Mammary epithelial cell (primary cell): ENCODE measurements at regions of chr4 and their contacts with region 1.

Region 1: GRCh38 chr4:101347557-101348366 is 436 bp upstream of the PPP3CA start:
- DNase-seq: peak; percentile 96
- H3K4me3 ChIP-seq: peak overlapping the region; percentile 77 to 97 (median 96)
- H3K27ac ChIP-seq: peak overlapping the region; percentile 96
- H3K4me1 ChIP-seq: peaks cover 31% of the 10 kb centered on the region
- H3K27me3 ChIP-seq: no peaks in the 10 kb centered on the region
- CTCF ChIP-seq: peak in 1 of 2 donors; percentile 14

Region 2: DNA sequence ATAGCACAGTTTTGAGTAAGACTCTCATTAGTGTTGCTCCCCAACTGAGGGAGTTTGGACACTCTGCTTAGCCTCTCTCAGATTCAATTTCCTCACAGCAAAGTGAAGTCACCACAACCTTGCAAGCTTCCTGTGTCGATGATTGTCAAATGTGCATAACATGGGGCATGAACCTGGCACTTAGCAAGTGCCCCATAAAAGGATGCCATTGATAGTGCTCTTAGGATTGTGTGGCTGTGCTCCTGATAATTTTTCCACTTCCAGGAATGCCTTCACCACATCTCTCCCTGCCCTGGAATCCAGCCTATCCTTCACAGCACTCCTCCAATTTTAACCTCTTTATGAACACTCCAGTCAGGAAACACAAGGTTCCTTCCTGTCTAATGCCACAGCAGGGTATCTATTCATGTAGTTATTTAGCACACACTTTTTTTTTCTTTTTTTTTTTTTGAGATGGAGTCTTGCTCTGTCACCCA is 309.8 kb before region 1 on chr4:
- CTCF ChIA-PET with region 1: no interaction called
- dilution Hi-C with region 1: no loop called
- in situ Hi-C with region 1: no loop called
- intact Hi-C with region 1: loop called (anchors 5 kb)
- DNase-seq: no peak
- H3K4me3 ChIP-seq: no peak overlapping the region
- H3K27ac ChIP-seq: no peak overlapping the region
- H3K4me1 ChIP-seq: peaks cover 15% of the 10 kb centered on the region
- H3K27me3 ChIP-seq: no peaks in the 10 kb centered on the region
- CTCF ChIP-seq: no peak

Region 3: GRCh38 chr4:101187841-101188240 is 159.9 kb before region 1 on chr4:
- CTCF ChIA-PET with region 1: no interaction called
- dilution Hi-C with region 1: no loop called
- in situ Hi-C with region 1: no loop called
- intact Hi-C with region 1: loop called (anchors 1 kb)
- DNase-seq: no peak
- H3K4me3 ChIP-seq: no peak overlapping the region
- H3K27ac ChIP-seq: no peak overlapping the region
- H3K4me1 ChIP-seq: peaks cover 18% of the 10 kb centered on the region
- H3K27me3 ChIP-seq: no peaks in the 10 kb centered on the region
- CTCF ChIP-seq: peak; percentile 29 to 52

Region 4: GRCh38 chr4:101367201-101367600 is 19.4 kb after region 1 on chr4:
- CTCF ChIA-PET with region 1: no interaction called
- dilution Hi-C with region 1: no loop called
- in situ Hi-C with region 1: no loop called
- intact Hi-C with region 1: loop called (anchors 1 kb)
- DNase-seq: peak; percentile 79
- H3K4me3 ChIP-seq: no peak overlapping the region
- H3K27ac ChIP-seq: peak overlapping the region; percentile 86
- H3K4me1 ChIP-seq: peaks cover 20% of the 10 kb centered on the region
- H3K27me3 ChIP-seq: no peaks in the 10 kb centered on the region
- CTCF ChIP-seq: no peak

Region 5: DNA sequence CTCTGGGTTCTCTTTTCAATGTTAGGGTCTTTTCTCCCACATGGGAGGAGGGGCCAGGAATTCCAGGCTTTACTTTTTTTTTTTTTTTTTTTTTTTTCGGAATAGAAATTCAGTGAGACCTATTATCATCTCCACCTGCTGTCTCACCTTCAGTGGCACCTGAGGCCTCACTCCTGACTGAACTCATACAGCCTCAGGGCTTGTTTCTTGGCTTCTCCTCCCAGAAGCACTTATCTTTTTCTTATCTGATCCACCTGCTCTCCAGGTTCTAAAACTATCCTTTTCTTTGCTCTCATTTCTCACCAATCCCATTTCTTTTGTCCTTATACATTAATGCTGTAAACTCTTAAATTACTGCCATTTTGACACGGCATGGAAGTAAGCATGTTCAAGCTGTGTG is 116.8 kb after region 1 on chr4:
- CTCF ChIA-PET with region 1: no interaction called
- dilution Hi-C with region 1: no loop called
- in situ Hi-C with region 1: no loop called
- intact Hi-C with region 1: loop called (anchors 5 kb)
- DNase-seq: no peak
- H3K4me3 ChIP-seq: no peak overlapping the region
- H3K27ac ChIP-seq: no peak overlapping the region
- H3K4me1 ChIP-seq: no peaks in the 10 kb centered on the region
- H3K27me3 ChIP-seq: no peaks in the 10 kb centered on the region
- CTCF ChIP-seq: no peak

Region 6: GRCh38 chr4:101599620-101600019 is 251.9 kb after region 1 on chr4:
- CTCF ChIA-PET with region 1: no interaction called
- dilution Hi-C with region 1: no loop called
- in situ Hi-C with region 1: no loop called
- intact Hi-C with region 1: loop called (anchors 1 kb)
- DNase-seq: peak; percentile 84
- H3K4me3 ChIP-seq: no peak overlapping the region
- H3K27ac ChIP-seq: no peak overlapping the region
- H3K4me1 ChIP-seq: peaks cover 10% of the 10 kb centered on the region
- H3K27me3 ChIP-seq: no peaks in the 10 kb centered on the region
- CTCF ChIP-seq: no peak

Region 7: DNA sequence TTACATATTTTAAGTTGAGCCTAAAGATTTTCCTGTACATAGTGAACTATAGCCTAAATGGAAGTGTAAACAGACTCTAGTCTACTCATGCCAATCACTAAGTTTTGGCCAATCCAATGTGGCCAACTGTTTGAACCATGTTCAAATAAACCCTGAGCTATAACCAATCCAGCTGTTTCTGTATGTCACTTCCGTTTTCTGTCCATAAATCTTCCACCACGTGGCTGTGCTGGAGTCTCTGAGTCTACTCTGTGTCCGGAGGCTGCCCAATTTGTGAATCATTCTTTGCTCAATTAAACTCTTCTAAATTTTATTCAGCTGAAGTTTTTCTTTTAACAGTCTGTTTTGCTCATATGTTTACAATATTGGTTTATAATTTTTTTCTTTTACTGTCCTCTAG is 330.4 kb after region 1 on chr4:
- CTCF ChIA-PET with region 1: no interaction called
- dilution Hi-C with region 1: no loop called
- in situ Hi-C with region 1: no loop called
- intact Hi-C with region 1: no loop called
- DNase-seq: no peak
- H3K4me3 ChIP-seq: no peak overlapping the region
- H3K27ac ChIP-seq: no peak overlapping the region
- H3K4me1 ChIP-seq: no peaks in the 10 kb centered on the region
- H3K27me3 ChIP-seq: no peaks in the 10 kb centered on the region
- CTCF ChIP-seq: no peak

Region 8: DNA sequence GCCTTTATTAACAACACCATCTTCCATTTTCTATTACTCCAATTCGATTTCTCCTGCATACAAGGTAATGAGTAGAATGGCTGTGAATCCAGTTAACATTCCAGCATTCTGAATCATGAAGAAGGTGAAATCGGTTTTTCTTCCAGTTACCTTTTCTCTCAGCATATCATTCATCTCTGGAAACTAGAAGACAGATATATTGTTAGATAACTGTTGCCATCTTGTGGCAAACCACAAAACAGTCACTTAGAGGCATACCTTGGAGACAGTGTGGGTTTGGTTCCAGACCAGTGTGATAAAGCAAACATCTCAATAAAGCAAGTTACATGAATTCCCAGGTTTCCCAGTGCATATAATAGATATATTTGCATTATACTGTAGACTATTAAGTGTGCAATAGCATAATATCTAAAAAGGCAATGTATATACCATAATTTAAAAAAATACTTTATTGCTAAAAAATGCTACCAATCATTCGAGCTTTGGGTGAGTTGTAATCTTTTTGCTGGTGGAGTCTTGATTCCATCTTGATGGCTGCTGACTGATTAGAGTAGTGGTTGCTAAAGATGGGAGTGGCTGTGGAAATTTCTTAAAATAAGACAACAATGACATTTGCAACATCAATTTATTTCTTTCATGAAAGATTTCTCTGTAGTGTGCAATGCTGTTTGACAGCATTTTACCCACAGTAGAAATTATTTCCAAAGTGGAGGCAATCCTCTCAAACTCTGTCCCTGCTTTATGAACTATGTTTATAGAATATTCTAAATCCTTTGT is 915.4 kb after region 1 on chr4:
- CTCF ChIA-PET with region 1: no interaction called
- dilution Hi-C with region 1: no loop called
- in situ Hi-C with region 1: no loop called
- intact Hi-C with region 1: loop called (anchors 10 kb)
- DNase-seq: peak; percentile 70
- H3K4me3 ChIP-seq: no peak overlapping the region
- H3K27ac ChIP-seq: no peak overlapping the region
- H3K4me1 ChIP-seq: no peaks in the 10 kb centered on the region
- H3K27me3 ChIP-seq: no peaks in the 10 kb centered on the region
- CTCF ChIP-seq: peak; percentile 50 to 62